ENCODE measurements at regions of chrX and their contacts with region 1.

Region 1: GRCh38 chrX:13996650-13997049 is 33.0 kb downstream of the GEMIN8 start:
- DNase-seq: no peak
- H3K4me3 Mint-ChIP-seq: no peak overlapping the region
- H3K27ac Mint-ChIP-seq: no peak overlapping the region
- H3K4me1 Mint-ChIP-seq: no peaks in the 10 kb centered on the region
- H3K27me3 Mint-ChIP-seq: no peaks in the 10 kb centered on the region
- CTCF ChIP-seq: no peak

Region 2: GRCh38 chrX:13923845-13924244 is 72.8 kb before region 1 on chrX:
- CTCF ChIA-PET with region 1: interaction called, 11 read pairs
- intact Hi-C with region 1: no loop called
- DNase-seq: no peak
- H3K4me3 Mint-ChIP-seq: no peak overlapping the region
- H3K27ac Mint-ChIP-seq: no peak overlapping the region
- H3K4me1 Mint-ChIP-seq: no peaks in the 10 kb centered on the region
- H3K27me3 Mint-ChIP-seq: no peaks in the 10 kb centered on the region
- CTCF ChIP-seq: no peak

Measured in Calu3 (cell line).